ENCODE measurements at regions of chr17 and their contacts with region 1.

Region 1: GRCh38 chr17:5706577-5707216 is 122.4 kb upstream of the NLRP1 start:
- DNase-seq: peak; percentile 16
- H3K4me3 Mint-ChIP-seq: no peak overlapping the region
- H3K27ac Mint-ChIP-seq: no peak overlapping the region
- H3K4me1 Mint-ChIP-seq: no peaks in the 10 kb centered on the region
- H3K27me3 Mint-ChIP-seq: peaks cover 9% of the 10 kb centered on the region

Region 2: GRCh38 chr17:5584383-5585286 is 122.1 kb before region 1 on chr17 and contains the start of gene NLRP1:
- intact Hi-C with region 1: loop called (anchors 2 kb)
- DNase-seq: peak; percentile 92
- H3K4me3 Mint-ChIP-seq: peak within 1 kb of the TSS; percentile 89
- H3K27ac Mint-ChIP-seq: peak within 1 kb of the TSS; percentile 93
- H3K4me1 Mint-ChIP-seq: peaks cover 55% of the 10 kb centered on the region
- H3K27me3 Mint-ChIP-seq: peaks cover 6% of the 10 kb centered on the region
- total RNA-seq, gene NLRP1: 26.3 and 26.9 TPM in 2 replicates

Region 3: DNA sequence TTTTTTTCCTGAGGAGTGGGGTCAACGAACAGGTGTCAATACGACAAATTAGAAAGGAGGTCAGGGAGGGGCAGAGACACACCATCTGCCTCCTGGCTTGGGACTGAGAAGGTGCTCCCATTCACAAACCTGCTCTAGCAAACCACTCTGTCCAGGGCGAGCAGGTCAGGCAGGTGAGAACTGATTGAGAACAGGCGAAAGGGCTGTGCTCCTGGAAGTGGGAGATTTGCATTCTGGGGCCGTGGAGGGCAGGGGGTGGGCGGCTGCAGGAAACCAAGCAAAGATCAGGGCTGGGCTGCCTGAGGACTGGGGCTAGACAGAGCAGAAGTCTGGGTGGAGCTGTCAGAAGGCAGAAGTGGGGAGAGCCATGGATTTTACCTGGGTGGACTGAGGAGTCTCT is 23.5 kb before region 1 on chr17:
- intact Hi-C with region 1: no loop called
- DNase-seq: no peak
- H3K4me3 Mint-ChIP-seq: no peak overlapping the region
- H3K27ac Mint-ChIP-seq: no peak overlapping the region
- H3K4me1 Mint-ChIP-seq: no peaks in the 10 kb centered on the region
- H3K27me3 Mint-ChIP-seq: peaks cover 15% of the 10 kb centered on the region

Region 4: GRCh38 chr17:5809580-5810188 is 103.0 kb after region 1 on chr17:
- intact Hi-C with region 1: no loop called
- DNase-seq: no peak
- H3K4me3 Mint-ChIP-seq: no peak overlapping the region
- H3K27ac Mint-ChIP-seq: no peak overlapping the region
- H3K4me1 Mint-ChIP-seq: no peaks in the 10 kb centered on the region
- H3K27me3 Mint-ChIP-seq: peaks cover 7% of the 10 kb centered on the region

Measured in activated T-helper 2 cell treated with anti-CD3 and anti-CD28 coated beads, Interferon-gamma antibody, Interleukin-2, Interleukin-4, amounts not matched to agents 10 μg/mL and 5 μg/mL and 100 μg/mL, durations not matched to agents 14 hours and 24 hours and 36 hours (primary cell).